Esophagus squamous epithelium (tissue), 5 donors: ENCODE measurements at regions of chr4 and their contacts with region 1.

Region 1: DNA sequence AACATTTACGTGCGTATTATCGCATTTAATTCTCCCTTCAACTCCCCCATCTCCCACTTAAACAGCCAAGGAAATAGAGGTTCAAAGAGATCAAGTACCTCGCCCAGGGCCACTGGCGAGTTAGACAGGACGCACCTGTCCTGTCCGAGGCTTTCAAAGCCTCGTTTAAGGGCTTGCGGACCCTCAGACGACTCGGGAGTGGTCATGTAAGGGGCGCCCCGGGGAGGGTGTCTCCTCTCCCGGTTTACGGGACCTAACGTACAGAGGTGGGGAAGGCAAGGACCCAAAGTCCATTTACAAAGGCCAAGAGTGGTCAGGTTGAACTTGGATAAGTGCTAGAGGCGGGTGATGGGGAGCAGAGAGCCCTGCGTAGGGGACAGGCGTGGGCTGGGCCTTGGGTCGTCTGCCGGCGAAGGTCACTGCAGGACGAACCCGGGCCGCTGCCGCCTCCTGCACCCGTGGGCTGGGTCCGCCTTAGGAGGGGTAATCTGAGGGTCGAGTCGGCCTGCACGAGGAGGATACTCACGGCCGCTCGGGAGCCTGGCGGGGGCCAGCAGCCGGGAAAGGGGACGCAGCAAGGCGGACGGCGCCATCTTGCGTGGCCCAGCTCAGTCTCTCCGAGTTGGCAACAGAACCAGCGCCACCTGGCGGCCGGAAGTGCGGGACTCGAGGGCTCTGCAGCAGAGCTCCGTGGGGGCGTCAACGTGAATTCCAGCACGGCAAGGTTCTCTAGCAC is 5.9 kb upstream of the NAA15 start:
- DNase-seq: peak; percentile 81
- H3K4me3 ChIP-seq: peak overlapping the region; percentile 61 to 91 (median 81)
- H3K27ac ChIP-seq: peak overlapping the region; percentile 90 to 95 (median 90)
- H3K4me1 ChIP-seq: peaks cover 6 to 57% (median 29%) of the 10 kb centered on the region in 3 donors
- H3K27me3 ChIP-seq: no peaks in the 10 kb centered on the region
- CTCF ChIP-seq: peak; percentile 90 to 98 (median 95)
- POLR2A ChIP-seq: peak in 1 of 4 donors; percentile 49

Region 2: DNA sequence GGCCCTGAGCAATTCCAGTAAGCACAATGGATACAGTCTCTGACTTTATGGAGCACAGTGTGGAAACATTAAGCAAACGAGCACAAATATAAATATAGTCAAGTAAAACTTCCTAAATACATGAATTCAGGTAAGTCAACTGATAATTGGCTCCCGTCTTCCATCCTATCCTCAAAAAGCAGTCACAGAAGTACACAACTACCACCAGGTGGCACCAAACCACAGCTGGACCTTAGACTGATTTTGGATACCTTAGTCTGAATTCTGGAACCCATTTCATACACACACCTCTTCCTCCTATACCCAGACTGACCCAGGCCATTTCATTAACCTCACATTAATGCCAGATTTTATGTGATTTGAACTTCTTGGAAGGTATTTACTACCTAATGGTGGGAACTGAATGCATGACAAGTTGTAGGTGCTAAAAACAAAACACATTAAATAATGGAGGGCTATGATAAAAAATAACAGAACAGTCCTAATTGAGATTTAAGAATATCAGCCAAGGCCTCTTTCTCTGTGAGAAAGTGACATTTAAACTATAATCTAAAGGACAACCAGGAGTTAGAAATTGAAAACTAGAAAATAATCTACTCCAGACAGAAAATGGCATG is 195.9 kb before region 1 on chr4:
- intact Hi-C with region 1: loop called (anchors 10 kb)
- DNase-seq: peak; percentile 2
- H3K4me3 ChIP-seq: no peak overlapping the region
- H3K27ac ChIP-seq: no peak overlapping the region
- H3K4me1 ChIP-seq: no peaks in the 10 kb centered on the region
- H3K27me3 ChIP-seq: no peaks in the 10 kb centered on the region
- CTCF ChIP-seq: peak; percentile 77 to 89 (median 84)
- POLR2A ChIP-seq: no peak

Region 3: DNA sequence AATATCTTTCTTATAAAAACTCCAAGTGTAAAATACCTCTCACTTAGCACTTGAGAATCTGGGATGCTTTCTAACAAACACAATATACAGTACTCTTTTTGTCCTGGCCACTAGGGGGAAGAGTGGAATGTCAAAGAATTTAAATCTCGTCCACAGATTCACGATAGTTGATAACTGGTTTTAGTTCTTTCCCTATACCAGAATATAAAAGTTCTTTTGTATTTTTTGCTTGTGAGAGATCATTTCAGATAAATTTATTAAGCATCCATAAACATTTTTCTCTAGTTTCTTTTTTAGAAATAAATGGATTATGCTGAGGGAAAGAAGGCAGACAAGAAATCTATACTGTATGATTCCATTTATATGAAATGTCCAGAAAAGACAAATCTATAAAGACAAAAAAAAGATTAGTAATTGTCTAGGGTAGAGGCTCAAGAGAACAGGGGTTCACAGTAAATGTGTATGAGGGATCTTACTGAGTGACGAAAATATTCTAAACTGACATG is 65.8 kb before region 1 on chr4:
- intact Hi-C with region 1: loop called (anchors 5 kb)
- DNase-seq: no peak
- H3K4me3 ChIP-seq: no peak overlapping the region
- H3K27ac ChIP-seq: no peak overlapping the region
- H3K4me1 ChIP-seq: no peaks in the 10 kb centered on the region
- H3K27me3 ChIP-seq: no peaks in the 10 kb centered on the region
- CTCF ChIP-seq: peak; percentile 53 to 83 (median 73)
- POLR2A ChIP-seq: no peak